ENCODE measurements at regions of chr18 and their contacts with region 1.

Region 1: DNA sequence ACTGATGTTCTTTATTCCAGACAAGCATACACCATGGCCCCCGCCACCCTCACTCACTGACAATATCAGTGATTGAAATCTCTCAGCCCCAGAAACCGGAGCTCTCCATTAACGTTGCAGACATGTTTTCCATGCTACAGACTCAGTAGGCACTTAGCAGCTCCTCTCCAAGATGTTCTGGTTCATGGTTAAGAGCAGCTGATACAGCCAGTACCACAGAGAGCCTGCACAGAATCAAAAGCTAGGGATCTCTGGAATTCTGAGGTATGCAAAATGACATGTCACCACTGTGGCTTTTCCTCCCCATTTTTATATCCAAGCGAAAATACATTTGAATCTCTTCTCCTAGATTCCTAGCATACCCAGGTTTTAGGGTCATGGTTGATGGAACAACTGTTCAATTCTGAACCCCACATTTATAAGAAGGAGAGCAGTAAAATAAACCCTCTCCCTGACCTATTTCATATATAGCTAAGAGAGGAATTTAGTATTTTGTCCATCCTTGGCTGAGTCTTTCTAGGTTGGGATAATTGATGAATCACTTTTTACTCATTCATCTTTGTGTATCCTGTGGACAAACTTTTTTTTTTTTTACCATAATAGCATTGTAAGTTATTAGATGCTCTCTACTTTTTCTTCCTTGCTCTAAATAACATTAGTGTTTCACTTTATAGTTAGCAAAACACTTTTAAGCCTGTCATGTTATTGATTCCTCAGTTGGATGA is 488.4 kb upstream of the PIK3C3 start:
- DNase-seq: no peak
- ATAC-seq: no peak
- H3K4me3 ChIP-seq: no peak overlapping the region
- H3K4me3 Mint-ChIP-seq: no peak overlapping the region
- H3K27ac ChIP-seq: no peak overlapping the region
- H3K27ac Mint-ChIP-seq: no peak overlapping the region
- H3K4me1 ChIP-seq: no peaks in the 10 kb centered on the region
- H3K4me1 Mint-ChIP-seq: no peaks in the 10 kb centered on the region
- H3K27me3 ChIP-seq: no peaks in the 10 kb centered on the region
- H3K27me3 Mint-ChIP-seq: no peaks in the 10 kb centered on the region

Region 2: DNA sequence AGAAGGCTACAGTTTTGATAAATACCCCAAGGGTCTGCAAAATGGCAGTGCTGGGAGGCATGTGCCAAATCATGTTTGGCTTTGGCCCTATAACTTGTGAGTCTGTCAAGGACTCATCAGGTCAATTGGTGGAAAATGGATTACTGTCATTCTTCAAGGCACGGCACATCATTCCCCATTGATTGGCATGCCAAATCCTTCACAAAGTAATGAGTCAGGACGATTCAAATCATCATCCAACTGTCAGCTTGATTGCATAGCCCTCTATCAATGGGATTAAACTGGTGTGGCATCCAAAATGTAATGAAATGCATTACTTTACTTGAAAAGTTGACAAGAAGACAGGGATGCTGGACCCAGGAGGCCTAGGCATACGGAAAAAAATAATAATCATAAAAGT is 46.8 kb after region 1 on chr18:
- CTCF ChIA-PET with region 1: no interaction called
- POLR2A ChIA-PET with region 1: no interaction called
- intact Hi-C with region 1: loop called in 1 of 2 experiments (anchors 10 kb)
- DNase-seq: no peak
- ATAC-seq: no peak
- H3K4me3 ChIP-seq: no peak overlapping the region
- H3K4me3 Mint-ChIP-seq: no peak overlapping the region
- H3K27ac ChIP-seq: no peak overlapping the region
- H3K27ac Mint-ChIP-seq: no peak overlapping the region
- H3K4me1 ChIP-seq: no peaks in the 10 kb centered on the region
- H3K4me1 Mint-ChIP-seq: no peaks in the 10 kb centered on the region
- H3K27me3 ChIP-seq: no peaks in the 10 kb centered on the region
- H3K27me3 Mint-ChIP-seq: no peaks in the 10 kb centered on the region

Measured in naive thymus-derived CD4-positive, alpha-beta T cell (primary cell).